OCI-LY7 (cell line): ENCODE measurements at regions of chr20 and their contacts with region 1.

Region 1: DNA sequence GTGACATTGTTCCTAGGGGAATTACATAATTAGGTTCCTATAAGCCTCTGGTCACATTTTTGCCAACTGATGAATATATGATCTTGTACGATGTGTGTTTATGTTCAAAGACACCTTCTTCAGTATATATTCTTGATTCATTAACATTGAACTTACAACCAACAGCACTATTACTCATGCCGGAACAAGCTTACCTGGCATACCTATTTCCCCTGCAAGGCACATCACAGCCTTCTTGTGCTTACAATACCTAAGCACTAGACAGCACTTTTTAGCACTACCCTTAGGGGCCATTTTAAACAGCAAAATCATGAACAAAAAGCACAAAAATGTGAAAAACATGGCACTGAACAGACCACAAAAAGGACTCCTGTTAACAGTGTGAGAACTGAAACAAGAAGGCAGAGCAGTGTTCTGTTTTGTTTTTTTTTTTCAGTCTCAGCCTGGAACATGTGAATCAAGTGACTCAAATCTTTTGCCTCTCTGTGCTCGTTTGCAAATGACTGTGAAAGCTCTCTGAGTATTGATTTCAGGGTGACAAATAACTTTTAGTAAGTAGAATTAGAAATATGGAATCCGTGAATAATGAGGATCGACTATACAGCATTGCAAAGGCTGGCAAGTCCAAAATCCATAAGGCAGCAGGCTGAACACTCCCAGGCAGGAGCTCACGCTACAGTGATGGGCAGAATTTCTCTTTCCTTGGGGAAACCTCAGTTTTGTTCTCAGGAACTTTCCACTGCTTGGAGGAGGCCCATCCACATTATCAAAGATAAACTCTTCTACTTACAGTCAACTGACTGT is 102.3 kb upstream of the TSHZ2 start:
- DNase-seq: no peak
- H3K4me3 ChIP-seq: no peak overlapping the region
- H3K27ac ChIP-seq: no peak overlapping the region
- H3K4me1 ChIP-seq: no peaks in the 10 kb centered on the region
- CTCF ChIP-seq: no peak

Region 2: GRCh38 chr20:52937591-52938102 is 67.7 kb after region 1 on chr20:
- CTCF ChIA-PET with region 1: no interaction called
- POLR2A ChIA-PET with region 1: no interaction called
- intact Hi-C with region 1: loop called (anchors 10 kb)
- DNase-seq: no peak
- H3K4me3 ChIP-seq: no peak overlapping the region
- H3K27ac ChIP-seq: no peak overlapping the region
- H3K4me1 ChIP-seq: no peaks in the 10 kb centered on the region
- CTCF ChIP-seq: peak; percentile 38; the same call in 1 of the 2 replicates